ENCODE measurements at regions of chr20 and their contacts with region 1.

Region 1: GRCh38 chr20:38771621-38772020 is 23.4 kb downstream of the ACTR5 start:
- DNase-seq: no peak
- H3K4me3 ChIP-seq: no peak overlapping the region
- H3K27ac ChIP-seq: no peak overlapping the region
- H3K4me1 ChIP-seq: no peaks in the 10 kb centered on the region
- H3K27me3 ChIP-seq: no peaks in the 10 kb centered on the region
- CTCF ChIP-seq: no peak

Region 2: DNA sequence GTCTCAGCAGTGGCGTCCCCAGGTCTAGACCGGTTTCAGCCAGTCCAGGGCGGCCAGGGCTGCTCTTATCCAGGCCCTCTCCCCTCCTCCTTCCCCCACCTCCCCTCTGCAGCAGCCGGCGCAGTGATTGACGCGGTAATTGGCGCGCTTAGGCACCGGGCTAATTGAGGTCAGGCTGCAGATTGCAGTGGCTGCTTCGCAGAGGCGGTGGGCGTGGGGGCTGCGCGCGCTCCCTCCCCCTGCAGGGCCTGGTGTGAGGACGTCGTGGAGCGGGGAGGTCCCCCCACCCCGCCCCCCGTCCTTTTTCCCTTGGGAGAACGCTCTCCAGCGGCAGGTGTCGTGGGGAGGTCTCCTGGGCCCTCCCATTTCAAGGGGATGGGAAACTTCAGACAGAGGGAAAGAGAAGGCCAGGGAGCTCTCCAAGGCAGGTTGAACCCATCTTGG is 1173.5 kb before region 1 on chr20:
- CTCF ChIA-PET with region 1: interaction called, 10 read pairs
- POLR2A ChIA-PET with region 1: no interaction called
- intact Hi-C with region 1: no loop called
- DNase-seq: no peak
- H3K4me3 ChIP-seq: no peak overlapping the region
- H3K27ac ChIP-seq: no peak overlapping the region
- H3K4me1 ChIP-seq: no peaks in the 10 kb centered on the region
- H3K27me3 ChIP-seq: peaks cover 92% of the 10 kb centered on the region
- CTCF ChIP-seq: no peak

Region 3: DNA sequence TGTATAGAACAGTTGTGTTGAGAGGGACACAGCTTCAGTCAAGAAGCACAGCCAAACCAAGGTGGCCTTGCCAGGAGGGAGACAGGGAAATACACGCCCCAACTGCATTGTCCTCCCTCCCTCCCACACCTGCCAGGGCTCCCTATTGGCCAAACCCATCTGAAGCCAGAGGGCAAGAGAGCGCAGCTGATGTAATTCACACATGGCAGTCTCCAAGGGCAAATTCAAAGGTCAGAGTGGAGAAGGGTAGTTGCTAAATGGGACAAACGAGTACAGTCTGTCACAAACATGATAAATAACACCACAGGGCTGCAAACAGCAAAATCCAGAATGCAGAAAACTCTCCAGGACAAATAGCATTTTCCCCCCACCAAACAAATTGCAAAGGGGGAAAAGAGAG is 10.7 kb after region 1 on chr20:
- CTCF ChIA-PET with region 1: no interaction called
- POLR2A ChIA-PET with region 1: no interaction called
- intact Hi-C with region 1: no loop called
- DNase-seq: no peak
- H3K4me3 ChIP-seq: no peak overlapping the region
- H3K27ac ChIP-seq: no peak overlapping the region
- H3K4me1 ChIP-seq: peaks cover 13% of the 10 kb centered on the region
- H3K27me3 ChIP-seq: no peaks in the 10 kb centered on the region
- CTCF ChIP-seq: no peak

Region 4: GRCh38 chr20:38825901-38826625 is 54.4 kb after region 1 on chr20:
- CTCF ChIA-PET with region 1: no interaction called
- POLR2A ChIA-PET with region 1: no interaction called
- intact Hi-C with region 1: no loop called
- DNase-seq: peak; percentile 41 to 85
- H3K4me3 ChIP-seq: no peak overlapping the region
- H3K27ac ChIP-seq: peak overlapping the region; percentile 44
- H3K4me1 ChIP-seq: peaks cover 46% of the 10 kb centered on the region
- H3K27me3 ChIP-seq: peaks cover 5% of the 10 kb centered on the region; the same call in 1 of the 2 replicates
- CTCF ChIP-seq: no peak

Measured in PC-9 (cell line).